HAP-1 (cell line): ENCODE measurements at regions of chr2 and their contacts with region 1.

Region 1: GRCh38 chr2:9799665-9800632 is 43.3 kb upstream of the TAF1B start:
- DNase-seq: peak; percentile 71 to 94
- H3K4me3 ChIP-seq: no peak overlapping the region
- H3K4me1 ChIP-seq: peaks cover 8% of the 10 kb centered on the region; the same call in 1 of the 2 replicates
- H3K27me3 ChIP-seq: no peaks in the 10 kb centered on the region

Region 2: DNA sequence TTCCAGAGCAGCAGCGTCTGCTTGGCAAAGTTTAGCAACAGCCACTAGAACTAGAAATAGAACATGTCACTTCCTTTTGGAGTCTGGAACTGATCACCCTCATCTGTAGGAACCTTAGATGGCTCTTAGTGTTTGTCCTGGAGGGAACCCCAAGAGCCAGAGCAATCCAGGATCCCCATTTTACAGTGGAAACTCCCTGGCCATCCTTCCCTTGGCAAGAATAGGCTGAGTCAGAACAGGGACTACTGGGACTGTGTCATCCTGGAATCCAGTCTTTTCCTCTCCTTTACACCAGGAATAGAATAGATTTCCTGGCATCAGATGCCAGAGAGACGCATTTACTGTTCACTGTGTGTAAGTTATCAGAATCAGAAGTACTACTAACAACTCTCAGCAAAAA is 118.3 kb after region 1 on chr2:
- in situ Hi-C with region 1: no loop called
- DNase-seq: no peak
- H3K4me3 ChIP-seq: no peak overlapping the region
- H3K4me1 ChIP-seq: no peaks in the 10 kb centered on the region
- H3K27me3 ChIP-seq: no peaks in the 10 kb centered on the region

Region 3: DNA sequence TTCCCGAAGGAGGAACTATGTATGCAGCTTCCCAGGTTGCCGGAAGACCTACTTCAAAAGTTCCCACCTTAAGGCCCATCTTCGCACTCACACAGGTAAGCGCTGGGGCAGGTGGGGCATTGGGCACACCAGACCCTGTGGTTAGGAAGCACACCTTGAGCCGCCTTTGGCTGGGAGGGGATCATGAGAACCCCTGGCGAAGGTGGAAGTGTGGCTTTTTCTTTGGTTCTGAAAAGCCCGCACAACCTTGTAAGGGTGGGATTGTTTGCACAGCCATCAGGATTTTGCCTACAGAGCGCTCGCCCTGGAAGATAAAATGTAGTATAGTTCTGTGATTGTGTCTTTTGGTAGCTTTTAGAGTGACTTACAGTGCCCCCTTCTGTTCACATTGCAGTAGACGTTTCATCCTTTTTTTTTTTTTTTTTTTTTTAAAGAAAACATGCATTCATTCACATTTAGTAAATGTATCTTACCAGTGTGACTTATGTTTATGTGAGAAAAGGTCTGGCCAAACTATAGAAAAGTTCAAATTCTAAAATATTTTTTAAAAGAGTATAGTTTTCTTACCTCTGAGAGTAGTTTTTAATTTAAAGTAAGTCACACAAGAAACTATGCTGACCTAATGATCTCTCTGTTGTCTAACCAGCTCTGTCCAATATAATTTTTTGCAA is 248.7 kb after region 1 on chr2:
- in situ Hi-C with region 1: loop called (anchors 5 kb)
- DNase-seq: peak; percentile 42 to 47
- H3K4me3 ChIP-seq: no peak overlapping the region
- H3K4me1 ChIP-seq: peaks cover 3% of the 10 kb centered on the region
- H3K27me3 ChIP-seq: no peaks in the 10 kb centered on the region

Region 4: GRCh38 chr2:10424051-10424450 is 624.1 kb after region 1 on chr2:
- in situ Hi-C with region 1: loop called (anchors 10 kb)
- DNase-seq: no peak
- H3K4me3 ChIP-seq: no peak overlapping the region
- H3K4me1 ChIP-seq: no peaks in the 10 kb centered on the region
- H3K27me3 ChIP-seq: no peaks in the 10 kb centered on the region